ENCODE measurements at regions of chr3 and their contacts with region 1.

Region 1: DNA sequence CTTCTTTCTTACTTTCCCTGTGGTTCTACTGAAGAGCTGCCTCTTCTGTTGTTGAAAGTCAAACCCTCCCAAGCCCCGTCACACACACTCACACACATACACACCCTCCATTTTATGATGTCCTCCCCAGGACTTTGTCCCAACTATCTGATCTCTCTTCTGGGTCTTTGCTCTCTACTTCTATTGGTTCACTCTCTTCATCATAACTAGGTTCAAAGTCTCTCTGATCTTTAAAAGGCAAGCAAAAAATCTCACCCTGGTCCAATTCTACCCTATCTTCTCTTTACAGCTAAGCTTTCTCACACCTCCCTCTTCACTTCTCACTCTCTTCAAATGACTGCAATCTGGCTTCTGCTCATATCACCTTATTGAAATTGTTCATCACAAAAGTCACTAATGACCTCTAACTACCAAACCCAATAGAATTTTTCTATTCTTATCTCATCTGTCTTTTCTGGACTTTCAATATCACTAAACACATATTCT is 34.8 kb downstream of the LRRFIP2 start:
- DNase-seq: no peak
- ATAC-seq: no peak
- H3K4me3 ChIP-seq: no peak overlapping the region
- H3K4me3 Mint-ChIP-seq: no peak overlapping the region
- H3K27ac ChIP-seq: no peak overlapping the region
- H3K27ac Mint-ChIP-seq: no peak overlapping the region
- H3K4me1 ChIP-seq: no peaks in the 10 kb centered on the region
- H3K4me1 Mint-ChIP-seq: peaks cover 8 to 12% (median 10%) of the 10 kb centered on the region in 3 donors
- H3K27me3 ChIP-seq: no peaks in the 10 kb centered on the region
- H3K27me3 Mint-ChIP-seq: no peaks in the 10 kb centered on the region

Region 2: DNA sequence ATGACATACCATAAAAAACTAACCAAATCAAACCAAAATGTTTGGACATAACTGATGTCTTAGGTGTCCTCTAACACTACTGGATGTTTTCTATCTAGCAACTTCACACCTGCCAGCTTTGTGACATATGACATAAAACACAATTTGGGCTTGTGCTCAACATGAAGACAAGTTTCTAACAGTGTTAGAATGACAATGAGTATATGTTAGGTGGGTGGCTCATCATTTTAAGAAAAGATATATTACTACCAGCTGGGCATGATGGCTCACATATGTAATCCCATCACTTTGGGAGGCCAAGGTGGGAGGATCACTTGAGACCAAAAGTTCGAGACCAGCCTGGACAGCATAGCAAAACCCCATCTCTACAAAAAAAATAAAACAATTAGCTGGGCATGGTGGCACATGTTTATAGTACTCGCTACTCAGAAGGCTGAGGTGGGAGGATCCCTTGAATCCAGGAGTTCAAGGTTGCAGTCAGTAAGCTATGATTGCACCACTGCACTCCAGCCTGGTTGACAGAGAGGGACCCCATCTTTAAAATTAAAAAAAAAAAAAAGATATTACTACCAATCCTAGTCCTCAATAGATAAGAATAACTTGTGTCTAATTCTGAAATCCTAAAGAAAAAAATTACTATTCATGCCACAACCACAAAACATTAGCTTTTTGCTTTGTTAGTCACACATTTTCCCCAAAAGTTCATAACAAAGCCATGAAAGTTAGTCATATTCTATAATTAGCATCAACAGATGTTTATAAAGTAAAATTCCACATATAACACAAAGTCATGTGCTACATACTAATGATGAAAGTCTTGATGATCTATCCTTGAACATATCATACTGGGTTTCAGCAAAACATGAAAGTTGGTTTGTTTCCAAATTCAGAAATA is 25.1 kb before region 1 on chr3:
- CTCF ChIA-PET with region 1: no interaction called
- POLR2A ChIA-PET with region 1: interaction called in 1 of 2 experiments, 11 read pairs
- DNase-seq: no peak
- ATAC-seq: no peak
- H3K4me3 ChIP-seq: no peak overlapping the region
- H3K4me3 Mint-ChIP-seq: no peak overlapping the region
- H3K27ac ChIP-seq: no peak overlapping the region
- H3K27ac Mint-ChIP-seq: no peak overlapping the region
- H3K4me1 ChIP-seq: no peaks in the 10 kb centered on the region
- H3K4me1 Mint-ChIP-seq: peaks cover 0 to 3% (median 3%) of the 10 kb centered on the region in 3 donors
- H3K27me3 ChIP-seq: no peaks in the 10 kb centered on the region
- H3K27me3 Mint-ChIP-seq: no peaks in the 10 kb centered on the region

Region 3: DNA sequence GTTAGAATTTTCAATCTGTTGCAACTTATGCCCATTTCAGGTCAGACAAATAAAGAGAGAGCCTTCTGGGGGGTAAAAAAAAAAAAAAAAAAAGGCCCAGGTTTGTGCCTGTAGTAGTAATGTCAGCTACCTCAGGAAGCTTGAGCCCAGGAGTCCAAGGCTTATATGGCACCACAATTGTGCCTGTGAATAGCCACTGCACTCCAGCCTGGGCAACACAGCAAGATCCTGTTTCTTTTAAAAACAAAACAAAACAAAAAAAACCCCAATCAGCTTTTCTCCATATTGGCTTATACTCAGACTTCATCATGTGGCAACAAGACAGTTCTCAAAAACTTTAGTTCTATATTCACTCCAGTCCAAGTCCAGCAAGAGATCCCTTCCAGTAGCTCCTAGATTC is 43.2 kb after region 1 on chr3:
- CTCF ChIA-PET with region 1: interaction called in 1 of 2 experiments, 19 read pairs
- POLR2A ChIA-PET with region 1: no interaction called
- DNase-seq: no peak
- ATAC-seq: no peak
- H3K4me3 ChIP-seq: no peak overlapping the region
- H3K4me3 Mint-ChIP-seq: no peak overlapping the region
- H3K27ac ChIP-seq: no peak overlapping the region
- H3K27ac Mint-ChIP-seq: no peak overlapping the region
- H3K4me1 ChIP-seq: peaks cover 0 to 3% of the 10 kb centered on the region in 2 experiments
- H3K4me1 Mint-ChIP-seq: peaks cover 13 to 29% (median 21%) of the 10 kb centered on the region in 3 donors
- H3K27me3 ChIP-seq: no peaks in the 10 kb centered on the region
- H3K27me3 Mint-ChIP-seq: no peaks in the 10 kb centered on the region